ENCODE measurements at regions of chr12 and their contacts with region 1.

Region 1: DNA sequence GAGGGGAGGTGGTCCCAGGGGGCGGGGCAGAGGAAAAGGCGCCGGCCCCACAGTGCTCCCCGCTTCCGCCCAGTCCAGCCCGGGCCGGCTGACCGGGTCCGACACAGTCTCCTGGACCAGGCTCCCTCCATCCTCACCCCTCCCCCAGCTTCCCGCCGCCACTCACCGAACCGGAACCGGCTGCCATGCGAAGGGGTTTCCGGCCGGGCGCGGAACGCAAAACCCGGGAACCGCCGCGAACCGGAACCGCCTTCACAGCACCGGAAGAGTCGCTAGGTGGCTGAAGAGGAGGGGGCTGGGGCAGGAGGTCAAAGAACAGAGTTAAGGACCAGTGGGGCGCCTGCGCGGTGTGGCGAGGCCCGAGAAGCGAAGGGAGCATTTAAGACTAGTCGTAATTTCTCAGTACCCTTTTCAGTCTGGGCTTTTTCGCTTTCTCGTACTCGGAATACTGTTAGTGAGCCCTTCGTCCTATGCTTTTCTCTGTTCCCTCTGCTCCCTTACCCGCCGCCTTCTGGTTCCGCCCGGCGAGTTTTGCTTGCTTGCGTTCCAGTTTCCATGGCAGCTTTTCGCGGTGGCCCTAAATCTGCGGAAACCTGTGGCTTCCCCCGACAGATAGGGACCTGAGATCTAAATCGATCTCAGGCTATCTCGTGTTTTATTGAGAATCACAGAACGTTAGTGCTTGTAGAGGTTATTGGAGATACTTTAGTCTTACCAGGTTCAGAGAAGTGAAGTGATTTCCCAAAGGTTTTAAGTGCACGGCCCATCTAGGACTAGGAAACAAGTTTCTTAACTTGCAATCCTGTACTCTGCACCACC is at the start of gene SENP1:
- DNase-seq: peak; percentile 81 to 87
- ATAC-seq: peak; percentile 94 to 97
- H3K4me3 ChIP-seq: peak within 1 kb of the TSS; percentile 77 to 92 (median 89)
- H3K27ac ChIP-seq: peak within 1 kb of the TSS; percentile 87 to 96 (median 90)
- H3K4me1 ChIP-seq: peaks cover 20 to 27% of the 10 kb centered on the region in 2 donors
- H3K27me3 ChIP-seq: no peaks in the 10 kb centered on the region
- CTCF ChIP-seq: peak in 4 of 5 experiments; percentile 6 to 51 (median 42)
- POLR2A ChIP-seq: peak; percentile 38 to 46
- total RNA-seq, gene SENP1: 8.7 to 19.1 (median 13.1) TPM

Region 2: DNA sequence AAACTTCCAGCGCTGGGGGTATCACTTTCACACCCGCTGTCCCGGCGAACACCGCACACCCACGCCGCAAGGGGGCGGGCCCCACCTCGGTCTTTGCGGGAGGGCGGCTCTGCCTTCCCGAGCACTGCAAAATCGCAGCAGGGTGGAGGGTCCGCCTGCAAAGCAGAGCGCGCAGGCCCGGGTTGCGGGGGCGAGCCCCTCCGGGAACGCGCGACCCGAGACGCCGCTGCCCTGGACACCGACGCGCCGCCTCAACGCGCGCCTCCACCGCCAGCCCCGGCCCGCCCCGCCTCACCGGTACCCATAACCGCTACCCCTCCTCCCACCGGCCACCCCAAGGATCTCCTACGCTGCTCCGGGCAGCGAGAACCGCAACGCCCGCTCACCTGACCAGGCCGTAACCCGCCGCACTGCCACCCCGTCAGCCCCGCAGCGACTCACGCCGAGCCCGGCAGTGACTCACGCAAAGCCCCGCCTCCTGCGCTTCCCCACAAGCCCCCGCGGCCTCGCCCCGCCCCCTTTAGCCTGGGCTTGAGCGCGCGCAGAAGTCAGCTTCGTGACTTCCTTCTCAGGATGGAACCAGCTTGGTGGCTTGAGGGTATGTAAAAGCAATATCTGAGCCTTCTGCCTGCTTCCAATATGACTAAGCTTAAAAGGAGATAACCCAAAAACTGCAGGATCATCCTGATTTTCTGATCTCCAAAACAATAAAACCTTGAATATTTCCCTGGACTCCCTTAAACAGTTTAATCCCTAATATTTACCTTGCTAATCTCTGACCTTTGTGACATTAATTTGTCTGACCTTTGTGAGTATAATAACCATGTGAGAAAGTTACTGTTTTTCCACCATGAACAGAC is 400.3 kb before region 1 on chr12 and contains the start of gene RPAP3:
- in situ Hi-C with region 1: no loop called
- intact Hi-C with region 1: loop called (anchors 5 kb)
- DNase-seq: peak; percentile 93 to 96
- ATAC-seq: peak; percentile 97
- H3K4me3 ChIP-seq: peak within 1 kb of the TSS; percentile 72 to 84 (median 80)
- H3K27ac ChIP-seq: peak within 1 kb of the TSS; percentile 88 to 90 (median 90)
- H3K4me1 ChIP-seq: peaks cover 9 to 18% of the 10 kb centered on the region in 2 donors
- H3K27me3 ChIP-seq: no peaks in the 10 kb centered on the region
- CTCF ChIP-seq: peak; percentile 71 to 84 (median 80)
- POLR2A ChIP-seq: peak; percentile 67 to 75
- total RNA-seq, gene RPAP3: 15.1 to 24.8 (median 20.5) TPM